CD8-positive, alpha-beta memory T cell (primary cell): ENCODE measurements at regions of chr21 and their contacts with region 1.

Region 1: GRCh38 chr21:34986561-34987500 is 62.3 kb downstream of the RUNX1 start:
- DNase-seq: peak; percentile 22 to 83 (median 64)
- H3K4me3 ChIP-seq: peak overlapping the region; percentile 26
- H3K4me3 Mint-ChIP-seq: peak overlapping the region; percentile 51 to 84 (median 82)
- H3K27ac ChIP-seq: peak overlapping the region; percentile 8
- H3K27ac Mint-ChIP-seq: peak overlapping the region; percentile 82 to 99 (median 94)
- H3K4me1 ChIP-seq: peaks cover 94% of the 10 kb centered on the region
- H3K4me1 Mint-ChIP-seq: peaks cover 92 to 97% (median 96%) of the 10 kb centered on the region in 3 donors
- H3K27me3 ChIP-seq: no peaks in the 10 kb centered on the region
- H3K27me3 Mint-ChIP-seq: no peaks in the 10 kb centered on the region

Region 2: GRCh38 chr21:34933609-34934335 is 53.1 kb before region 1 on chr21:
- CTCF ChIA-PET with region 1: interaction called, 10 read pairs
- POLR2A ChIA-PET with region 1: no interaction called
- DNase-seq: peak in 4 of 5 donors; percentile 21 to 63 (median 57)
- H3K4me3 ChIP-seq: peak overlapping the region; percentile 51
- H3K4me3 Mint-ChIP-seq: peak overlapping the region; percentile 57 to 90 (median 84)
- H3K27ac ChIP-seq: peak overlapping the region; percentile 32
- H3K27ac Mint-ChIP-seq: peak overlapping the region; percentile 91 to 99 (median 98)
- H3K4me1 ChIP-seq: peaks cover 81% of the 10 kb centered on the region
- H3K4me1 Mint-ChIP-seq: peaks cover 83 to 92% (median 91%) of the 10 kb centered on the region in 3 donors
- H3K27me3 ChIP-seq: no peaks in the 10 kb centered on the region
- H3K27me3 Mint-ChIP-seq: no peaks in the 10 kb centered on the region

Region 3: DNA sequence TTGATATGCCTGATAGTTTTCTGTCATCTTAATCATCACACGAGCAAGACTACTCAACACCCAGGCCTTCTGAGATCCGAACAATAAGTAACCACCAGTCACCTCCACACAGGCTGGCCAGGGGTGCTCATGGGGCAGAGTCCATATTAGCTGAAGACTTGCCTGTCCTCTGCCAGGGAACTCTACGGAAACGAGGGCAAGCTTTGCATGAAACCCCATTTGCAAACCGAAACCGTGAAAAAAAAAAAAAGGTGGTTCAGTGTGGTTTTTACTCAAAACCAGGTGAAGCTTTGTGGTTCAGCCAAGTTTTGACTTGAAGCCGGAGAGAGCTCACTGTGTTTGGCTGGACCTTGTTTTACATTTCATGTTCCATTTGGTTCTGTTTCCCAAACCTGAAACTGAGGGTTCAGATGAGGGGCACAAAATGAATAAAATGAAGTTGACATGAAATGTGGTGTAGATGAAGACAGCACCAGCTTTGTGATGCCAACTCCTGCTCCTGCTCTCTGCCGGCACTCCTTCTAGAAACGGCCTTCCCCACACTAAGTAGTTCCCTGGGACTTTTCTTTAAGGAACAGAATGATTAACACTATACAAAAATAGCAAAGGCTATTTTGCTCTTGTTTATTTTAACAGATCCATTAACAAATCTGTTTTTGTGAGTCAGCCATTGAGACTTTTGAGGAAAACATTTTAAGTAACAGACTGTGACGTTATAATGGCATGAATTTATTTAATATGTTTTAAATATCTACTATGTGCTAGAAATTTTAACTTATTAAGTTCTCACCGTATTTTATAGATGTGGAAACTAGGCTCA is 12.5 kb before region 1 on chr21:
- CTCF ChIA-PET with region 1: interaction called, 13 read pairs
- POLR2A ChIA-PET with region 1: interaction called, 15 read pairs
- DNase-seq: peak in 4 of 5 donors; percentile 30 to 79 (median 73)
- H3K4me3 ChIP-seq: peak overlapping the region; percentile 36
- H3K4me3 Mint-ChIP-seq: peak overlapping the region; percentile 54 to 91 (median 84)
- H3K27ac ChIP-seq: no peak overlapping the region
- H3K27ac Mint-ChIP-seq: peak overlapping the region; percentile 62 to 97 (median 92)
- H3K4me1 ChIP-seq: peaks cover 84% of the 10 kb centered on the region
- H3K4me1 Mint-ChIP-seq: peaks cover 76 to 95% (median 93%) of the 10 kb centered on the region in 3 donors
- H3K27me3 ChIP-seq: no peaks in the 10 kb centered on the region
- H3K27me3 Mint-ChIP-seq: no peaks in the 10 kb centered on the region